Ascending aorta (tissue), 2 donors: ENCODE measurements at regions of chr14 and their contacts with region 1.

Region 1: DNA sequence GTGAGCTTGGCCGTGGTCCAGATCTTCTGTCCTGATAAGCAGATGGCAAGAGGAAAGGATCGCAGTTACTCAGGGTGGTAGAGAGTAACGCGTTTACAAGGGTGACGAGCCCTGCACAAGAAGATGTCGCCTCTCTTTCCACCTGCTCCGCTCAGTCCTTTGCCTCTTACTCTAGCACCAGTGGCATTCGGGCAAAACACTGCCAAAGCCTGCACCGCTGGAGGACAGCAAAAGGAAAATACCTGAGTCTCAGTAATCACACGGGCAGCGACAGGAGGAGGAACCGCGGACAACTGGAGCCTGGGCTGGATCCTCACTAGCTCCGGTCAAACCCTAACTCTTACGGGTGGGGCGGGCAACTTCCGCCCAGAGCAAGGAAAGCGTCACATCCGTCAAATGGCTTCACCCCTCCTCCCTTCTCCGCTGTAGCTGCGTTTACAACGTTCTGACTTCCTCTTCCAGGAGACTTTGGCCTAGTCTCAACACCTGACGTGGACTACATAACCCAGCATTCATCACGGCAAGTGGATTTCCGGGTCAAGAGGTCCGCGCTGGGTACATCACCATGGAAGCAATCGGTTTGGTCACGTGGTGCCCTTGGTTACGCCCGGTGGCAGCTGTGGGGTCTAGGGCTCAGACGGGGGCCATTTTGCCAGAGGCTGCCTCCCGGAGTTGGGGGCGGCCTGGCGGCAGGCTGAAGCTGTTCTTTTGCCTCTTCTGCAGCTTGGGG is at the starts of genes KLHL28 and TOGARAM1:
- DNase-seq: peak; percentile 97 to 100
- H3K4me3 ChIP-seq: peak within 1 kb of the TSS; percentile 83 to 96
- H3K27ac ChIP-seq: peak within 1 kb of the TSS; percentile 81 to 90
- H3K4me1 ChIP-seq: peaks cover 2 to 22% of the 10 kb centered on the region in 2 donors
- H3K27me3 ChIP-seq: no peaks in the 10 kb centered on the region
- CTCF ChIP-seq: no peak
- total RNA-seq, gene KLHL28: 6.1 TPM
- total RNA-seq, gene TOGARAM1: 1.8 TPM

Region 2: DNA sequence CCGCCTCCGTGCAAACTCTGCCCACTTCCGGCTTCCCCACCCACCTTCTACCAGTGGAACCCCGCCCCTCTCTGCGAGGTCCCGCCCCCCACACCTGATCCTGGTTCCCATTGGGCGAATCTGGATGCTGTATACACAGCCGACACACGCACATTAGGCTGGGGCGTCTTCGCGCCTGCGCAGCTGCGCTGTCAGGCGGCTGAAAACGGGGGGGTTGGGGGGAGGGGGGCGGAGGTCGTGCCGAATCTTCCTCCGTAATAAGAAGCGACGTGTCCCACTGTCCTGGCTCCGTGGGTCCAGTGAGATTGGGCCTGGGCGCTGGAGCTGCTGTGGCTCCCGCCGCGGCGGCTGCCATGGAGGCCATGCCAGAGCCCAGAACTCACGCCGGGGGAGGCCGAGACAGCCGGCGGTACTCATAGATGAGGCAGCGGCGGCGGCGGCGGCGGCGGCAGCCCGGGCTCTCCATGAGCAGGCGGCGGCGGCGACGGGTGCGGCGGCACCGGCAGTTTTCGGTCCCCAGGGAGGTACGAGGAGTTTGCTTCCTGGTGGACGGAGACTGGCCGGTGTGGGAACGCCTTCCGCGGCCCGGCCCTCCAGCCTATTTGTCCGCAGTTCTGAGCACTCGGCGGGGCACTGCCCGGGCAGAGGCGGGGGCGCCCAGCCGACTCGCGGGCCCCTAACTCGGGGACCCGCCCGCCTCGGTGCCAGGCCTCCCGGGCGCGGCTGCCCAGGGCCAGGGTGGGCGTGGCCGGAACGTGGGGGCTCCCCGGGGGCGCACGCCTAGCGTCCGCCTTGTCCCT is 64.5 kb before region 1 on chr14:
- intact Hi-C with region 1: loop called (anchors 1 kb)
- DNase-seq: peak; percentile 97 to 99
- H3K4me3 ChIP-seq: peak overlapping the region; percentile 77 to 82
- H3K27ac ChIP-seq: peak overlapping the region; percentile 99 to 100
- H3K4me1 ChIP-seq: peaks cover 0 to 15% of the 10 kb centered on the region in 2 donors
- H3K27me3 ChIP-seq: no peaks in the 10 kb centered on the region
- CTCF ChIP-seq: no peak

Region 3: GRCh38 chr14:44912041-44912869 is 49.5 kb before region 1 on chr14:
- intact Hi-C with region 1: loop called (anchors 5 kb)
- DNase-seq: no peak
- H3K4me3 ChIP-seq: peak overlapping the region; percentile 56 to 77
- H3K27ac ChIP-seq: no peak overlapping the region
- H3K4me1 ChIP-seq: peaks cover 0 to 6% of the 10 kb centered on the region in 2 donors
- H3K27me3 ChIP-seq: no peaks in the 10 kb centered on the region
- CTCF ChIP-seq: no peak

Region 4: GRCh38 chr14:44945264-44945663 is 16.5 kb before region 1 on chr14:
- intact Hi-C with region 1: no loop called
- DNase-seq: no peak
- H3K4me3 ChIP-seq: no peak overlapping the region
- H3K27ac ChIP-seq: no peak overlapping the region
- H3K4me1 ChIP-seq: no peaks in the 10 kb centered on the region
- H3K27me3 ChIP-seq: no peaks in the 10 kb centered on the region
- CTCF ChIP-seq: no peak

Region 5: DNA sequence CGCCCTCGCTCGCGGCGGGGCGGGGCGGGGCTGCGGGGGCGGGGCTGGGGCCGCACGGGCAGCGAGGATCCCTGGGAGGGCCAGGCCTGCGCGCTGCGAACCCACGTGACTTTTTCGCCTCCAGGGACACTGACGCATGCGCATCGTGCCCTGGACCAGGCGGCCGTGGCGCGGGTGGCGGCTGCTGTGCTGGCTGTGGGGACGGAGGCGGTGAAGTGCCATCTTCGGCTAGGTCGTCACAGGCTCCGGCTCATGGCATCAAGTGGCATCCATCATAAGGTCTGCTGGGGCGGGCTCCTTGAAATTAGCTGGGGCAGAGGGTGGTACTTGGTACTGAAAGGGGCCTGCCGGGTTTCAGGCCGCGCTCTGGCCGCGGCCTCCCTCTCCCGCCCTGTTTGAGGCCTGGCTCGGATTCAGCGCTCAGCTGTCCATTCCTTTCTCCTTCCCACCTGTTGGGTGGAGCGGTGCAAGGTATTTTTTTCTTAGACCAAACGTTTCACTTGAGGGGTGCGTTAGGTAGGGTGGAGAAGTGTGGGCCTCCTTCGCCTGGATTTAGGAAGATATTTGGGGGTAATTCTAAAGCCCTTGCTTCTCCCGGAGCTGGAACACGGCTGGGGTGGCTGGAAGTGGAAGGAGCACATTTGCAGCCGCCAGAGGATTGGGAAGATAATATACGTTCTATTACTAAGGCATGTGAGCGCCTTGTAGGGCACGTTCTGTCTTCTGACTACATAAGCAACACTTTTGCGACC is 122.4 kb after region 1 on chr14 and contains the start of gene PRPF39:
- intact Hi-C with region 1: loop called (anchors 1 kb)
- DNase-seq: peak; percentile 72 to 96
- H3K4me3 ChIP-seq: peak within 1 kb of the TSS; percentile 83 to 94
- H3K27ac ChIP-seq: peak within 1 kb of the TSS; percentile 71 to 80
- H3K4me1 ChIP-seq: peaks cover 0 to 14% of the 10 kb centered on the region in 2 donors
- H3K27me3 ChIP-seq: no peaks in the 10 kb centered on the region
- CTCF ChIP-seq: no peak
- total RNA-seq, gene PRPF39: 43.2 TPM

Region 6: GRCh38 chr14:45134051-45134958 is 172.5 kb after region 1 on chr14 and contains the start of gene FKBP3:
- intact Hi-C with region 1: loop called (anchors 1 kb)
- DNase-seq: peak; percentile 91 to 98
- H3K4me3 ChIP-seq: peak within 1 kb of the TSS; percentile 72 to 77
- H3K27ac ChIP-seq: peak within 1 kb of the TSS; percentile 78 to 91
- H3K4me1 ChIP-seq: peaks cover 2 to 23% of the 10 kb centered on the region in 2 donors
- H3K27me3 ChIP-seq: no peaks in the 10 kb centered on the region
- CTCF ChIP-seq: no peak
- total RNA-seq, gene FKBP3: 8.8 TPM

Region 7: GRCh38 chr14:45253068-45253753 is 291.4 kb after region 1 on chr14 and contains the start of gene MIS18BP1:
- intact Hi-C with region 1: loop called (anchors 2 kb)
- DNase-seq: peak; percentile 81 to 97
- H3K4me3 ChIP-seq: peak within 1 kb of the TSS; percentile 66 to 76
- H3K27ac ChIP-seq: peak within 1 kb of the TSS; percentile 85 to 87
- H3K4me1 ChIP-seq: peaks cover 0 to 9% of the 10 kb centered on the region in 2 donors
- H3K27me3 ChIP-seq: no peaks in the 10 kb centered on the region
- CTCF ChIP-seq: peak; percentile 62 to 74 (median 71)
- total RNA-seq, gene MIS18BP1: 35.9 TPM